AG04449 (cell line): ENCODE measurements at regions of chr1 and their contacts with region 1.

Region 1: DNA sequence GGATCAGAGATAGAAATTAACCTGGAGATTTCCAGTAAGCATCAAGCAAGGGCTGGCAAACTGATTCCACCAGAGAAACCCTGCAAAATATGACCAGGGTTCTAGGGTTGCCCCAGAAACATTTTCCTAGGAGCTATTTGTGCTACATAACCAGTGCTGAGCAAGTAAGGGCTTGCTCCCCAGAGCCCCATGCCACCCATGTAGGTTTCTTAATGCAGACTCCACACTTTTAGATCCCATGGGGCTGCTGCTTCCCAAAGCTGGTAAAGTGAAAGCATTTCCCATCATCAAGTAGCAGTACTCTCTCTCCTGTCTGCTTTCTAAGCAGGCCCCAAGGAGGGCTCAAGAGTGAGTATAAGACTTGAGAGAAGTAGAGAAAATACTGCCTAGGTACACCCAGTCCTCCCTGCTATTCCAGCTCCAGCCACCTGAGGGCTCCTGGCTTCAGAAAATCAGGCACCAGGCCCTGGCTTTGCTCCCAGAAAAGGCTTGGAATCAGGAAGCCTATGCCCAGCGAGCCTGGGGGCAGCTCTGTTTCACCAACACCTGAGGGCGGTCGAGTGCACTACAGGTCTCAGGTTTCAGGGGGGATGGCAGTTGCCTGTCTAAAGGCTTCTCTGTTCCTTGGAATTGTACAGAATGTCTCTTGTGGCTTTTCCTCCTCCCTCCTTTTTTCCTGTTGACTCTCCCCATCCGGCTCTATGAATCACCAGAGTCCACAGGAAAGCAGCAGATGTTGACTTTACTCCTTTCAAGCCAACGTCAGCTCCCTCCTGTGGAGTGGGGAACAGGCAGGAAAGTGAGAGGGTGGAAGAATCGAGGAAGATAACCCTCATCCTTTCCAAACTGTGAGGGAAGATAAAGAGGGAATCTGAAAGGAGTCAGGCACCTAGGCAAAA is 6.2 kb upstream of the ANKRD35 start:
- DNase-seq: peak; percentile 95
- H3K4me3 ChIP-seq: no peak overlapping the region; the same call in 1 of the 2 replicates
- CTCF ChIP-seq: peak; percentile 79

Region 2: GRCh38 chr1:145858894-145859490 is 32.8 kb before region 1 on chr1 and contains the start of gene PIAS3:
- CTCF ChIA-PET with region 1: interaction called, 46 read pairs
- POLR2A ChIA-PET with region 1: interaction called, 13 read pairs
- DNase-seq: peak; percentile 64
- H3K4me3 ChIP-seq: peak within 1 kb of the TSS; percentile 92
- CTCF ChIP-seq: no peak

Region 3: GRCh38 chr1:145879775-145880174 is 12.1 kb before region 1 on chr1:
- CTCF ChIA-PET with region 1: interaction called, 27 read pairs
- POLR2A ChIA-PET with region 1: no interaction called
- DNase-seq: no peak
- H3K4me3 ChIP-seq: no peak overlapping the region
- CTCF ChIP-seq: no peak

Region 4: GRCh38 chr1:145927063-145927886 is 35.4 kb after region 1 on chr1 and contains the start of gene RBM8A:
- CTCF ChIA-PET with region 1: interaction called, 23 read pairs
- POLR2A ChIA-PET with region 1: interaction called, 8 read pairs
- DNase-seq: peak; percentile 92
- H3K4me3 ChIP-seq: peak within 1 kb of the TSS; percentile 87
- CTCF ChIP-seq: peak; percentile 63

Region 5: GRCh38 chr1:146007506-146008133 is 115.8 kb after region 1 on chr1:
- CTCF ChIA-PET with region 1: interaction called, 40 read pairs
- POLR2A ChIA-PET with region 1: interaction called, 4 read pairs
- DNase-seq: no peak
- H3K4me3 ChIP-seq: no peak overlapping the region
- CTCF ChIP-seq: no peak

Region 6: DNA sequence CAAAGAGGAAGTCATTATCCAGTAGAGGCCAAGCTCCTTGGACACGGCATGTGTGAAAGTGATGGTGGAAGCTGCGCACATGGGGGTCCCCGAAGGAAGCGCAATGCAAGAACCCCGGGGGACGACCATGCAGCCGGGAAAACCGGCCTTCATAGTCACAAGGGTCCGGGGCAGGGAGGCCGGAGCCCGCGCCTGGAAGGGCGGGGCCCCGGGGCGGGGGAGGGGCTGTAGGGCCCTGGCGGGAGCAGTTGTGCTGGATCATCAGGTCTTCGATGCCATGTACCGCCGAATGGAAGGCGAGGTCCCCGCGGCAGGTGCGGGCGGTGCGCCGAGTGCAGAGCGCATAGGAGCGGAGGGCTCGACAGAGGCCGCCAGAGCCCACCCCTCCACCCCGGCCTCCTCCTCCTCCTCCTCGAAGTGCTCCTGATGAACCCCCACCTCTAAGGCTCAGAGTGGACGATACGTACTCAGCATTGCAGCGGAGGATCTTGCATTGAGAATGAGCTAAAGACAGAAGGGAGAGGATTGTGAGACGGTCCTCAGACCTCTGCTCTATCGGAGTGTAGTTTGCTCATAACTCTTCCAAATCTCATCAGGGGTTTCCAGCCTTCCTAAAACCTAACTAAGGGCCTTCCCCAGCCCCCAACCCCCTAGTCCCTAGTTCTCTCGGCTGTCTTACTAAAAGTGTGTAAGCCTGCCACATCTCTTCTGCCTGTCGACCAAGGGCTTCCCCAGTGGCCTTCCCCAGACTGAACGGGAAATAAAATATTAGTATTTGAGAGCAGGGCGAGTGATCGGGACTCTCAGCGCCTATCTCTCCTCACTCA is 127.6 kb after region 1 on chr1:
- CTCF ChIA-PET with region 1: interaction called, 40 read pairs
- POLR2A ChIA-PET with region 1: no interaction called
- DNase-seq: no peak
- H3K4me3 ChIP-seq: no peak overlapping the region
- CTCF ChIP-seq: no peak